ENCODE measurements at regions of chr1 and their contacts with region 1.

Region 1: GRCh38 chr1:169610108-169610507 is 19.8 kb downstream of the SELP start:
- DNase-seq: no peak
- ATAC-seq: no peak

Region 2: DNA sequence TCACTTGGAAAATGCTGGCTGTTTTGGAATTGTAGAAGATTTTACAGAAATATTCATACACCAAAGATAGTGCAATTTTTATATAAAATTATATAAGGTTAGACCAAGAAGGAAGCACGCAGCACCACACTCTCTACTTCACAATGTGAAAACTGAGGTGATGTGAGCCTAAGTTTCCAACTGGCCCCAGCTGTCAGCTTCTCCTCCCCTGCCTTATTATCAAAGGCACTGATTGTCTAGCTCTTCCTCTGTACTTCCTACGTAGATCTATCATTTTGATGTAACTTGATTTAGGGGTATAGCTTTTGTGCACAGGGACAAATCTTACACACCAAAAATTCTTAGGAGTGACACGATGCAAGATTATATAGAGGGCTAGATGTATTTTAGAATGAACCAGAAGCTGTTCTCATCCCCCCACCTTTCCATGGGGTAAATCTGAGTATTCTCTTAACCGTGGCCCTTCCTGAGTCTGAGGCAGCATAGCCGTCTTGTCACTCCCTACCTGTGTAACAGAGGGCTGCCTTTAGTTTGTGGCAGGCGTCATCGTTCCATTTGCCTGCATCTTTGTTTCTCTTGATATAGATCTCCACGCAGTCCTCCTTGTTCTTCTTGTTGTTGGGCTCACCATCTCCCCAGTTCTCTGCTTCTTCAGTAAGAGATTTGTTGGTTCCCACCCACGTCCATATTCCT is 98.0 kb after region 1 on chr1:
- intact Hi-C with region 1: loop called (anchors 10 kb)
- DNase-seq: no peak
- ATAC-seq: no peak